Vagina (tissue), 2 donors: ENCODE measurements at regions of chr12 and their contacts with region 1.

Region 1: GRCh38 chr12:49188914-49189367 is at the start of gene TUBA1A:
- DNase-seq: peak in 1 of 2 donors; percentile 99
- H3K4me3 ChIP-seq: peak within 1 kb of the TSS; percentile 78 to 97
- H3K27ac ChIP-seq: peak within 1 kb of the TSS; percentile 99
- H3K4me1 ChIP-seq: peaks cover 14% of the 10 kb centered on the region
- H3K27me3 ChIP-seq: no peaks in the 10 kb centered on the region
- CTCF ChIP-seq: no peak
- POLR2A ChIP-seq: peak in 1 of 2 donors; percentile 94
- total RNA-seq, gene TUBA1A: 236 TPM

Region 2: GRCh38 chr12:49130151-49131050 is 58.5 kb before region 1 on chr12:
- intact Hi-C with region 1: loop called (anchors 2 kb)
- DNase-seq: peak in 1 of 2 donors; percentile 94
- H3K4me3 ChIP-seq: peak overlapping the region; percentile 83 to 92
- H3K27ac ChIP-seq: peak overlapping the region; percentile 98
- H3K4me1 ChIP-seq: peaks cover 36% of the 10 kb centered on the region
- H3K27me3 ChIP-seq: no peaks in the 10 kb centered on the region
- CTCF ChIP-seq: peak; percentile 61 to 81 (median 78)
- POLR2A ChIP-seq: peak in 1 of 2 donors; percentile 65